ENCODE measurements at regions of chr10 and their contacts with region 1.

Region 1: DNA sequence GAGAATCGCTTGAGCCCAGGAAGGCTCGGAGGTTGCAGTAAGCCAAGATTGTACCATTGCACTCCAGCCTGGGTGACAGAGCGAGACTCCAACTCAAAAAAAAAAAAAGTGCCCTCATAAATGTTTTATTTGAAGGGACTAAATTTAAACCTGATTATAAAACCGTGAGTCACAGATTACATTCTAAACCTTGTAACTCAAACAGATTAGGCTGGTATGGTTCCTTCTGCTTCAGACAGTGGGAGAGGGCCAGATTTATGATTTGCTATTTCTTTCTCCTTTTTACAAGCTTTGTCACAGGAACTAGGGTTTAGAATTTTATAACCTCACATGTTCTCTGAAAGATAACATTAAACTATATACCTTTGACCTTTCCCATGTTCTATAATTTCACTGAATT is 801.2 kb upstream of the ZWINT start:
- DNase-seq: peak; percentile 83
- ATAC-seq: peak; percentile 83
- H3K4me3 ChIP-seq: no peak overlapping the region
- H3K27ac ChIP-seq: peak overlapping the region; percentile 80
- H3K4me1 ChIP-seq: peaks cover 24% of the 10 kb centered on the region
- H3K27me3 ChIP-seq: no peaks in the 10 kb centered on the region
- CTCF ChIP-seq: no peak

Region 2: DNA sequence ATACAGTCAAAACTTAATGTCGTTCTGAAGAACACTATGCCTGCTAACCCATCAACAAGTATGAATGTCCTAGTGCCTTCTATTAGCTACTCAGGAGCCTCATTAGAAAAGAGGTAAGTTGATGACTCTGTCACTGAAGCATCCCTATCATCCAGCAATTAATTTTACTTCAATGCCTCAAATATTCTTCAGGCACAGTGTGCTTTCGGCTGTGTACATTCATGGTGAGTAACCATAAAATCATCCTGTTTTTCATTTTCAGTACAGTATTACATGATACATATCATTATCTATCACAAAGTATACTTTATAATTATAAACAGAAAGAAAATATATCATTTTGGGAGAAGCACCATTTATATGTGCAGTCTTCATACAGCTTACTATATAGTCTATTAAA is 305.7 kb before region 1 on chr10:
- CTCF ChIA-PET with region 1: no interaction called
- POLR2A ChIA-PET with region 1: no interaction called
- intact Hi-C with region 1: loop called (anchors 2 kb)
- DNase-seq: peak; percentile 56
- ATAC-seq: peak; percentile 95
- H3K4me3 ChIP-seq: no peak overlapping the region
- H3K27ac ChIP-seq: no peak overlapping the region
- H3K4me1 ChIP-seq: no peaks in the 10 kb centered on the region
- H3K27me3 ChIP-seq: no peaks in the 10 kb centered on the region
- CTCF ChIP-seq: no peak

Region 3: GRCh38 chr10:57222603-57223002 is 60.4 kb after region 1 on chr10:
- CTCF ChIA-PET with region 1: no interaction called
- POLR2A ChIA-PET with region 1: no interaction called
- intact Hi-C with region 1: loop called (anchors 2 kb)
- DNase-seq: no peak
- ATAC-seq: peak; percentile 69
- H3K4me3 ChIP-seq: no peak overlapping the region
- H3K27ac ChIP-seq: peak overlapping the region; percentile 52
- H3K4me1 ChIP-seq: peaks cover 11% of the 10 kb centered on the region; the same call in 1 of the 2 replicates
- H3K27me3 ChIP-seq: no peaks in the 10 kb centered on the region
- CTCF ChIP-seq: no peak

Region 4: DNA sequence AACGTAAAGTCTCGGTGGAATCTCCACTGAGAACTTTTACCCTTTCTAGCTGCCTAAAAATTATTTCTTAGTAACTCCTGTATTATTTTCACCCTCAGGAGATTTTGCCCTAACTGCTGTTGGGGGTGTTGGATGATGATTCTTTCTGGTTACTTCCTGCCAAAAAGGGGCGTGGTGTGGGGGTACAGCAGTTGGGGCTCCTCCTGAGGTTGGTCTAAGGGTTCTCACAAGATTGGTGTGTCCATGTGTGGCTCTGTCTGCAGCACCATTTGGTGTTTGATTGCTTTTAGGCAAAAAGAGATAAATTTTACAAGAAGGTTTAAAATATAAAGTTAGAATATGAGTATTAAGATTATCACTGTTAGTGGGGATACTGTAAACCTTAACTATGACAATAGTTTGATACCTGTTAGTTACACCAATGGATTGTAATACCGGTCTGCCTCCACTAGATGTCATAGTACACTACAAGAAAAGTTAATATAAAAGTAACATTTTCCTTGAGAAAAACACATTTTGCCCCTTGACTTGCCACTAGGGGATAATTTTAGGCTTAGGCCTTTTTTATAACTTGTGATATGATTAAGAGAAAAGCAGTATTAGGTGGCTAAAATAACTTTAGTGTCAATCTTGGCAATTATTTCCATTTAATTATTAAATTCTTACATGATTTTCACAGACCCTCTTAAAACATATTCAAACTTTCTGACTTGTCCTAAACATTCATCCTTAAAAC is 176.8 kb after region 1 on chr10:
- CTCF ChIA-PET with region 1: no interaction called
- POLR2A ChIA-PET with region 1: no interaction called
- intact Hi-C with region 1: loop called (anchors 1 kb)
- DNase-seq: peak; percentile 86
- ATAC-seq: peak; percentile 77
- H3K4me3 ChIP-seq: no peak overlapping the region
- H3K27ac ChIP-seq: no peak overlapping the region
- H3K4me1 ChIP-seq: no peaks in the 10 kb centered on the region
- H3K27me3 ChIP-seq: no peaks in the 10 kb centered on the region
- CTCF ChIP-seq: peak; percentile 91

Region 5: GRCh38 chr10:57696641-57697040 is 534.4 kb after region 1 on chr10:
- CTCF ChIA-PET with region 1: no interaction called
- POLR2A ChIA-PET with region 1: no interaction called
- intact Hi-C with region 1: loop called (anchors 5 kb)
- DNase-seq: peak; percentile 94
- ATAC-seq: peak; percentile 96
- H3K4me3 ChIP-seq: no peak overlapping the region
- H3K27ac ChIP-seq: peak overlapping the region; percentile 63
- H3K4me1 ChIP-seq: peaks cover 35% of the 10 kb centered on the region
- H3K27me3 ChIP-seq: no peaks in the 10 kb centered on the region
- CTCF ChIP-seq: no peak

Measured in PC-3 (cell line).